ENCODE measurements at regions of chr4 and their contacts with region 1.

Region 1: DNA sequence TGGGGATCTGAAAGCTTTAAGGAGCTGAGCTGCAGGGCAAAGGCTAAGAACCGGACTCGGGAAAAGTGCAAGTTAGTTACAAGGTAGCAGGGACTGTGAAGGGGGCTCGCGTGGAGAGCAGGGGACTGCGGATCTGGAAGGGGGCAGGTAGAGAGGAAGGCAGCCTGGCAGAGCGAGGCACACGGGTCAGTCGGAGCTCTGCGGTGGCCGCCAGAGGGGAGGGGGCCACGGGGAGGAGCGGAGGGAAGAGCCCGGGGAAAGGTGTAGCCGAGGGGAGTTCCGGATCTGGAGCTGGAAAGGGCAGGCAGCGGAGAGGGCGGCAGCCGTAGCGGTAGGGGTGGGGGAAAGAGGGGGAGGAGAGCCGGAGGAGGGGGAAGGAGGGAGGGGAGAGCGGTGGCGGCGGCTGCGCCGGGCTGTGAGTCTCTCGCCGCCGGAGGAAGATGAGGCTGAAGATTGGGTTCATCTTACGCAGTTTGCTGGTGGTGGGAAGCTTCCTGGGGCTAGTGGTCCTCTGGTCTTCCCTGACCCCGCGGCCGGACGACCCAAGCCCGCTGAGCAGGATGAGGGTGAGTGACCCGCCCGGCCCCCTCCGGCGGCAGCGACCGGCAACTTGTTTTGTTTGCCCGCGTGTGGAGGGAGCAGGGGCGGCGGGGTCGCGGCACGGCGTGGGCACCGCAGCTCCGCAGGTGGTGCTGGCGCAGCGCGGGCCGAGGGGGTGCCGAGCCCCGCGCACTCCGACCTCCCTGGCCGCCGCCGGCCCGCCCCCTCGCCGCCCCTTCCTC is at the start of gene GALNT7:
- DNase-seq: peak; percentile 6
- H3K4me3 ChIP-seq: peak within 1 kb of the TSS; percentile 81 to 99 (median 92)
- H3K27ac ChIP-seq: peak within 1 kb of the TSS; percentile 92 to 96 (median 94)
- H3K4me1 ChIP-seq: peaks cover 8 to 49% (median 18%) of the 10 kb centered on the region in 3 donors
- H3K27me3 ChIP-seq: no peaks in the 10 kb centered on the region
- CTCF ChIP-seq: no peak
- POLR2A ChIP-seq: no peak
- total RNA-seq, gene GALNT7: 17.9 to 33.8 (median 23.6) TPM

Region 2: DNA sequence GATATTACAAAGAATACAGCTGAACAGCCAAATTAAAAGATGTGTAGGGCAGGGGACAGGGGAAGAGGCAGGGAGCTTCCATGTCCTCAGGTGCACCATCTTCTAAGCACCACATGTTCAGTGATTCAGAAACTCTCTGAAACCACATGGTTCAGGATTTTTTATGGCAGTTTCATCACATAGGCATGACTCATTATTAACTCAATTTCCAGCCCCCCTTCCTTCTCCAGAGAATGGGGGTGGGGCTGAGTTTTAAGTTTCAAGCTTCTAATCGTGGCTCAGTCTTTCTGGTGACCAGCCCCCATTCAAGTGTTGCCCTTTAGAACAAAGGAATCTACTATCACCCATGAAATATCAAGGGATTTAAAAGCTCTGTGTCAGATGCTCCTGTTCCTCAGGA is 317.7 kb before region 1 on chr4:
- intact Hi-C with region 1: no loop called
- DNase-seq: no peak
- H3K4me3 ChIP-seq: no peak overlapping the region
- H3K27ac ChIP-seq: no peak overlapping the region
- H3K4me1 ChIP-seq: no peaks in the 10 kb centered on the region
- H3K27me3 ChIP-seq: no peaks in the 10 kb centered on the region
- CTCF ChIP-seq: no peak
- POLR2A ChIP-seq: no peak

Region 3: GRCh38 chr4:173025131-173025530 is 143.5 kb before region 1 on chr4:
- intact Hi-C with region 1: loop called (anchors 10 kb)
- DNase-seq: no peak
- H3K4me3 ChIP-seq: no peak overlapping the region
- H3K27ac ChIP-seq: no peak overlapping the region
- H3K4me1 ChIP-seq: peaks cover 0 to 19% (median 3%) of the 10 kb centered on the region in 3 donors
- H3K27me3 ChIP-seq: peaks cover 0 to 3% (median 0%) of the 10 kb centered on the region in 4 donors
- CTCF ChIP-seq: peak; percentile 50 to 79 (median 67)
- POLR2A ChIP-seq: no peak

Region 4: DNA sequence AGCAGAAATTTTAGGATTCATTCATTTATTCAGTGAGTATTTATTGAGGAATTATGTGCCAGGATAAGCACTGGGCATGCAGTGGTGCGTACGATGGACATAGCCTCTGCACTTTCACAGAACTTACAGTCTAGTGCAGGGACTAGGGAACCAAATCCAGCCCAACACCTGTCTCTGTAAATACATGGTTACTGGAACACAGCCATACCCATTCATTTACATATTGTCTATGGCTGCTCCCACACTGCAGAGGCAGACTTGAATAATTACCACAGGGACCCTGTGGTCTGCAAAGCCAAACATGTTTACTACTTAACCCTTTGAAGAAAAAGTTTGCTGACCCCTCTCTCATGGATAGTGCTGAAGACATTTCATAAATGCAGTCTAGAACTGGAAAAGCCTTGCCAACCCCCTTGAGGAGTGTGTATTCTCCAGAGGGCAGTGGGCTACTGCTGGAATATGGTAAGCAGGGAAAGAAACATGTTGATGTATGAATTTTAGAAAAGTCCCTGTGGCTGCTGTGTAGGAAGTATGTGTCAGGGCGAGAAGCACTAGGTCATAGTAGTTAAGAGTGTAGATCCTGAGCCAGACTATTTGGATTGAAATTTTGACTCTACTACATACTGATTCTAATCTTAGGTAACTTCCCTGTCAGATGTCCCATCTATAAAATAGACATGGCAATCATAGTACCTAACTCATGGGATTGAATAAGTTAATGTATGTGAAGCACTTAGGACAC is 75.5 kb after region 1 on chr4:
- intact Hi-C with region 1: no loop called
- DNase-seq: no peak
- H3K4me3 ChIP-seq: no peak overlapping the region
- H3K27ac ChIP-seq: no peak overlapping the region
- H3K4me1 ChIP-seq: peaks cover 0 to 28% (median 0%) of the 10 kb centered on the region in 3 donors
- H3K27me3 ChIP-seq: no peaks in the 10 kb centered on the region
- CTCF ChIP-seq: no peak
- POLR2A ChIP-seq: no peak